ENCODE measurements at regions of chr5 and their contacts with region 1.

Region 1: DNA sequence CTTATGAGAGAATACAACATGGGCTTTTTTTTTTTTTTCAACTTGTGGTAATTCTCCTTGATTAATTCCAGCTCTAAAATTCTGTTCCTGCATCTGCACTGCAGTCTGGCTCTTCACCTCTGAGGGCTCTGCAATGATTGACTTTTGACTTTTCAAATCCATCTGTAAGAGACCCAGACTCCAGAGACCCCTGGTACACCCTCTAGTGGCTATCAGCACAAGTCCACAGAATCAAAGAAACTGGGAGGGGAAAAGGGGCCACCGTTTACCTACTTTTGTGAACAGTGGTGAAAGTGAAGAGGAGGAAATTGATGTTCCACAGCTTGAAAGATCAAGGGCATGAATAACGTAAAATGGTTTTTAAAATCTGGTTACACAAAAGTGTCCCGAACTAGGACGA is 151.6 kb downstream of the SLIT3 start:
- DNase-seq: peak; percentile 16
- ATAC-seq: peak; percentile 63; the same call in 2 of the 3 replicates
- H3K4me3 ChIP-seq: no peak overlapping the region
- H3K27ac ChIP-seq: no peak overlapping the region
- H3K4me1 ChIP-seq: no peaks in the 10 kb centered on the region
- H3K27me3 ChIP-seq: peaks cover 1 to 9% of the 10 kb centered on the region in 2 experiments; a peak in 2 of 5 replicates
- CTCF ChIP-seq: peak; percentile 35
- EP300 ChIP-seq: no peak
- POLR2A ChIP-seq: no peak
- RAD21 ChIP-seq: no peak

Region 2: DNA sequence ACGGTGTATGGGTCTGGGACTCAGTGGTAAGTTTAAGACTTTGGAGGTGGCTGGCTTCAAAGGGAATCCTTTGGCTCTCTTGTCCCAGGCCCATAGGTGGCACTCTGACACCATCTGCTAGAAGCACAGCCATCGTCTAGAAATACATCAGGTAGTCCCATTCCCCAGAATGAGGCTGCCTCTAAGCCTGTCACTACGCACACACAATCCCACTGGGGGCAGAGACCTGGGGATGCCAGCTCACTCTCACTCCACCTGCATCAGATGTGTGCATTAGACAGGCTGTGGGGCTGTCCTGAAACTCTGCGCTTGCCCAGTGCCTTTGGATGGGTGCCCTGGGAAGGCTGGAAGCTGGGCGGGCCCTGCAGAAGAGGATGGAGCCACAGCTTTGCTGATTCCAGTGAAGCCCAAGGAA is 442.7 kb before region 1 on chr5:
- CTCF ChIA-PET with region 1: no interaction called
- POLR2A ChIA-PET with region 1: no interaction called
- in situ Hi-C with region 1: no loop called
- intact Hi-C with region 1: loop called (anchors 5 kb)
- DNase-seq: peak; percentile 25
- ATAC-seq: peak; percentile 81
- H3K4me3 ChIP-seq: no peak overlapping the region
- H3K27ac ChIP-seq: no peak overlapping the region
- H3K4me1 ChIP-seq: no peaks in the 10 kb centered on the region
- H3K27me3 ChIP-seq: peaks cover 0 to 14% of the 10 kb centered on the region in 2 experiments; a peak in 2 of 5 replicates
- CTCF ChIP-seq: peak; percentile 71
- EP300 ChIP-seq: no peak
- POLR2A ChIP-seq: no peak
- RAD21 ChIP-seq: no peak

Region 3: GRCh38 chr5:169106911-169107706 is 42.2 kb before region 1 on chr5:
- CTCF ChIA-PET with region 1: no interaction called
- POLR2A ChIA-PET with region 1: no interaction called
- in situ Hi-C with region 1: no loop called
- intact Hi-C with region 1: no loop called
- DNase-seq: no peak
- ATAC-seq: no peak
- H3K4me3 ChIP-seq: no peak overlapping the region
- H3K27ac ChIP-seq: no peak overlapping the region
- H3K4me1 ChIP-seq: no peaks in the 10 kb centered on the region
- H3K27me3 ChIP-seq: no peaks in the 10 kb centered on the region
- CTCF ChIP-seq: no peak
- EP300 ChIP-seq: no peak
- POLR2A ChIP-seq: no peak
- RAD21 ChIP-seq: no peak

Region 4: DNA sequence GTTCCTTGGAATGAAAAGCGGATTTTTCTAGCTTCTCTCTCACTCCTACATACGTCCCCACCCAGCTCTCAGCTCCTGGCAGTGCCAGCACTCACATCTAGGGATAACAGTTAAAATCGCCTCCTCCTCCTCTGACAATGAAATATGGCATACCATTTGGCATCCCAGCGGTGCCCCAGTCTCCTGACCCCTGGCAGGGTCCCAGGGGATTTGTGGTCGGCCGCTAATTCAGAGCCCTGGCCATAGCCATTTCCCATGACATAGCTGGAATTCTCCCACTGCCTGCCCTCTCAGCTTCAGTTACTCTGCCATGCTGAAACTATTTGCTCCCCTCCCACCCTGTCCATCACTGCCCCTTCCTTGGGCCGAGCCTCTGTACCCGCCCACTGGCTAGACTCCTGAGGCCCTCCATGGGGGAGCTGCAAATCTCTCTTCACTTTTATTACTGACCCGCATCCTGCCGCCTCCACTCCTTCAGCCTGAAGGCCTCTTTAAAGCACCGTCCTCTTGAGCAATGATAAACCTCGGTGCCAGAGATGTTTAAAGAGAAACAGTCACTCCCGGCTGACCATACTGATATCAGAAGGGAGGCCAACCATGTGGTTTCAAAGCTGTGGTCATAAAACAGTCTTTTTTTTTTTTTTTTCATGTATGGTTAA is 11.8 kb after region 1 on chr5:
- CTCF ChIA-PET with region 1: no interaction called
- POLR2A ChIA-PET with region 1: no interaction called
- in situ Hi-C with region 1: no loop called
- intact Hi-C with region 1: no loop called
- DNase-seq: no peak
- ATAC-seq: no peak
- H3K4me3 ChIP-seq: no peak overlapping the region
- H3K27ac ChIP-seq: no peak overlapping the region
- H3K4me1 ChIP-seq: no peaks in the 10 kb centered on the region
- H3K27me3 ChIP-seq: no peaks in the 10 kb centered on the region
- CTCF ChIP-seq: no peak
- EP300 ChIP-seq: no peak
- POLR2A ChIP-seq: no peak
- RAD21 ChIP-seq: no peak